ENCODE measurements at regions of chr16 and their contacts with region 1.

Region 1: DNA sequence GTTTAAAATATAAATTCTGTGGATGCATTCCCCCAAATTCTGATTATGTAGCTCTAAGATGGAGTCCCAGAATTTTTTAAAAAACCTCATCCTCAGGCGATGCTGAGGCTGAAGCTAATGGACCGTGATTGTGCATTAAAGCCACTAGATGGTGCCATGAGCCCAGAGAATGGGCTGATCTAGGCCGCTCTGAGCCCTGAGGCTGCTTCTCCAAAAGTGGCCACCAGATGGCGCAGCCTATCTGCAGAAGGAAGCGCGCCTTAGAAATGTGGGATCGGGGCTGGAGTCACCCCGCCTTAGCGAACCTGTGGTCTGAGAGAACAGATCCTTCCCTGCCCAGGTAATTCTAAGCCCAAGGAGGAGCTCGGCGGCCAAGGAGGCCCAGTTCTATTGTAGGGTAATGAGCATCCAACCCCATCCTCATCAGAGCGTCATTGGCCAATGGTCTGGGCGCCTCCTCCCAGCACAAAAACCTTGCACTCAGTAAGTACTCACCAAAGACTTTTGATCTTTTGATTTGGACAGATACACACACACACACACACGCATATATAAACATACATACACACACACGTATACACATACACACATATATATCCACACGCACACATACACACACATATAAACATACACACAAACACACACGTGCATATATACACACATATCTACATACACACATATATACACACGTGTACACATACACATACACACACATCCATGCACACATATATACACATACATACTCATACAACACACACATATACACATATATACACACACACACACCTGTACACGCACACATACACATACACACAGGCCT is 13.7 kb upstream of the MMP2 start:
- DNase-seq: peak; percentile 94
- ATAC-seq: peak; percentile 88
- H3K4me3 Mint-ChIP-seq: no peak overlapping the region
- H3K27ac Mint-ChIP-seq: no peak overlapping the region
- H3K4me1 Mint-ChIP-seq: peaks cover 7% of the 10 kb centered on the region
- H3K27me3 Mint-ChIP-seq: peaks cover 24% of the 10 kb centered on the region
- CTCF ChIP-seq: peak; percentile 99

Region 2: DNA sequence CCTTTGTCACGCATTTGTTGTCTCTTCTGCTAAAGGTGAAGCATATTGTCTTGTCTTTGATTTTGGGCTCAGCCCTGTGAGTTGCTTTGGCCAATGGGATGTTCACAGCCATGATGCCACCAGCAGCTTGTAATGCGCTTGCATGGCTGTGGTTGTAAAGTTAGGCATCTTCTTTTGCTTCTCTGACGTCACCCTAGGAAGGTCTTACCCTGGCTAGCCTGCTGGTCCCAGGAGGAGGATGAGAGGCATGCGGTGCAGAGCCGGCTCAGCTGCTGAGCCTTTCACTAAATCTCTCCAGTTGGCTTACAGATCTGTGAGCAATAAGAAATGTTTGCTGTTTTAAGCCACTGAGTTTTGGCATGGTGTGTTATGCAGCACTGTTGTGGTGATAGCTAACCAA is 100.5 kb before region 1 on chr16:
- CTCF ChIA-PET with region 1: no interaction called
- POLR2A ChIA-PET with region 1: no interaction called
- DNase-seq: no peak
- ATAC-seq: no peak
- H3K4me3 Mint-ChIP-seq: no peak overlapping the region
- H3K27ac Mint-ChIP-seq: no peak overlapping the region
- H3K4me1 Mint-ChIP-seq: peaks cover 5% of the 10 kb centered on the region; the same call in 1 of the 2 replicates
- H3K27me3 Mint-ChIP-seq: peaks cover 3% of the 10 kb centered on the region; the same call in 1 of the 2 replicates
- CTCF ChIP-seq: no peak

Region 3: DNA sequence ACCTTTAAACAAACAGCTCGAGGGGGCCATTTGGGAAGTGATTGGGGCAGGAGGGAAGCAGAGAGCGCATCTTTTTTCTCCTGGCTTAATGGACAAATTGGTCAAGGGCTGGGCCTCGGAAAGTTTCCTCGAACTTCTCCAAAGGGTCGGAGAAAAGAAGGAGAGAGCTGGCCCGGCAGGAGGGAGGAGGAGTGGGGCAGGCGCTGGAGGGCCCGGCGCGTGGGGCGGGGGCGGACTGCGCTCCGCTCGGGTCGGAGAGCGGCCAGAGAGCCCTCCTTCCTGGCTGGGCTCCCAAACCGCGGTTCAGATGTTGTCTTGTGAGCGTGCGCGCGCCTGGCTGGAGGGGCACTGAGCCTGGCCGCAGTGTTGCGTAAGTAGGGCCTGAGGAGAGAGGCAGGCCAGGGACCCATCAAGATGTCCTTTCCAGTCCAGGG is 15.0 kb after region 1 on chr16:
- CTCF ChIA-PET with region 1: interaction called, 40 read pairs
- POLR2A ChIA-PET with region 1: no interaction called
- DNase-seq: peak; percentile 44
- ATAC-seq: peak; percentile 43
- H3K4me3 Mint-ChIP-seq: peak overlapping the region; percentile 90
- H3K27ac Mint-ChIP-seq: no peak overlapping the region
- H3K4me1 Mint-ChIP-seq: peaks cover 27% of the 10 kb centered on the region
- H3K27me3 Mint-ChIP-seq: peaks cover 61% of the 10 kb centered on the region
- CTCF ChIP-seq: no peak

Region 4: DNA sequence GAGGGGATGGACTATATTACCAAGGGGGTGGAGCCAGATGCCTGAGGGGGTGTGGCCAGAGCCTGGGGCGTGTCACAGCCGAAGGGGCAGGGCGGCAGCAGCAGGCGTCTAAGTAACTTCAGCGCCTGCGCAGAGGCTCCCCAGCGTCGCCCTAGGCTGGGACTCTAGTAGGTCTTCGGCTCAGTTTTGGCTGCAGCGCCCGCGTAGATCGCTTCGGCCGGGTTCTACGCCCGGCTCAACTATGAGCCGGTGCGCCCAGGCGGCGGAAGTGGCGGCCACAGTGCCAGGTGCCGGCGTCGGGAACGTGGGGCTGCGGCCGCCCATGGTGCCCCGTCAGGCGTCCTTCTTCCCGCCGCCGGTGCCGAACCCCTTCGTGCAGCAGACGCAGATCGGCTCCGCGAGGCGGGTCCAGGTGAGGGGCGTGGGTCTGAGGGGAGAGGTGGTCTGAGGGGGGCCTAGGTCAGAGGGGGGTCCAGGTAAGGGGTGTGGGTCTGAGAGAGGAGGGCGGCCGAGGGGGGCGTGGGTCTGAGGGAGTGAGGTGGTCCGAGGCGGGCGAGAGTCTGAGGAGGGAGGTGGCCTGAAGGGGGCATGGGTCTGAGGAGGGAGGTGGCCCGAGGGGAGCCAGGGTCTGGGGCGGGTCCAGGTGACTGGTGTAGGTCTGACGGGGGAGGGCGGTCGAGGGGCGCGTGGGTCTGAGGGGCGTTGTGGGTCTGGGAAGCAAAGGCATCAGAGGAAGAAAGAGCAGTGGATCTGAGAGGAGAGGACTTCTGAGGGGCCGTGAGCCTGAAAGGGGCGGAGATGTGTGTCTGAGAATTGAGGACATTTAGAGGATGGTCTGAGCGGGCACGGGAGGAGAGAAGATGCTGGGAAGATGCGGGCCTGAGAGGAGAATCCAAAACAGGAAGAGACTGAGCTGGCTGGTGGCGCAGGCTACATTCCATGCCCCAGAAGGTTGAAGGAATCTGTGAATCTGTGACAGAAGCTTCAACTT is 43.9 kb after region 1 on chr16 and contains the start of gene LPCAT2:
- CTCF ChIA-PET with region 1: interaction called, 14 read pairs
- POLR2A ChIA-PET with region 1: no interaction called
- DNase-seq: peak; percentile 95
- ATAC-seq: peak; percentile 94
- H3K4me3 Mint-ChIP-seq: peak within 1 kb of the TSS; percentile 86
- H3K27ac Mint-ChIP-seq: no peak within 1 kb of the TSS; the same call in 1 of the 2 replicates
- H3K4me1 Mint-ChIP-seq: peaks cover 20% of the 10 kb centered on the region
- H3K27me3 Mint-ChIP-seq: peaks cover 4% of the 10 kb centered on the region; the same call in 1 of the 2 replicates
- CTCF ChIP-seq: no peak
- total RNA-seq, gene LPCAT2: 5.8 to 7.1 TPM (median 7.0 TPM) in 3 replicates

Region 5: DNA sequence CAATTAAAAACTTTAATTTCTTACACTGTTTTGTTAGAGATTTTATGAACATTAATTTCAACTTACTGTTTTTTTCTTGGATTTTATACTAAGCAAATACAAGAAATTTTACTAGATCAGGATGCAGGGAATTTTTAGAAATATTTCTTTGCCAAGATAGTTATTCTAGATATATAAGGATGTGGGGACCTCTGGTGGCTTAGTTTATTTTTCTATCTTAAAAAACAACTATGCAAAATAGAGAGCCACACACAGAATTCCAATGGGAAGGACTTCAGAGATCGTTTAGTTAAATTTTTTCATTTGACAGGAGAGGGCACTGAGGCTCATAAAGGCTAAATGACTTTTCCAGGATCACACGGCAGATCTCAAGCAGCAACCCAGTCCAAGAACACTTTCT is 78.2 kb after region 1 on chr16:
- CTCF ChIA-PET with region 1: interaction called, 46 read pairs
- POLR2A ChIA-PET with region 1: no interaction called
- DNase-seq: no peak
- ATAC-seq: no peak
- H3K4me3 Mint-ChIP-seq: no peak overlapping the region
- H3K27ac Mint-ChIP-seq: no peak overlapping the region
- H3K4me1 Mint-ChIP-seq: 0 out of 2 replicates have a peak, but pooled peaks cover 4% of the 10 kb centered on the region
- H3K27me3 Mint-ChIP-seq: no peaks in the 10 kb centered on the region
- CTCF ChIP-seq: no peak

Region 6: GRCh38 chr16:55622930-55623561 is 157.8 kb after region 1 on chr16:
- CTCF ChIA-PET with region 1: interaction called, 33 read pairs
- POLR2A ChIA-PET with region 1: no interaction called
- DNase-seq: peak; percentile 73
- ATAC-seq: peak; percentile 97
- H3K4me3 Mint-ChIP-seq: no peak overlapping the region
- H3K27ac Mint-ChIP-seq: peak overlapping the region; percentile 21; the same call in 1 of the 2 replicates
- H3K4me1 Mint-ChIP-seq: peaks cover 17% of the 10 kb centered on the region
- H3K27me3 Mint-ChIP-seq: peaks cover 10% of the 10 kb centered on the region
- CTCF ChIP-seq: peak; percentile 28; the same call in 1 of the 2 replicates

Region 7: GRCh38 chr16:55668340-55669281 is 203.3 kb after region 1 on chr16:
- CTCF ChIA-PET with region 1: interaction called, 12 read pairs
- POLR2A ChIA-PET with region 1: no interaction called
- DNase-seq: peak; percentile 18
- ATAC-seq: peak; percentile 66
- H3K4me3 Mint-ChIP-seq: no peak overlapping the region
- H3K27ac Mint-ChIP-seq: no peak overlapping the region
- H3K4me1 Mint-ChIP-seq: peaks cover 15% of the 10 kb centered on the region
- H3K27me3 Mint-ChIP-seq: peaks cover 2% of the 10 kb centered on the region; the same call in 1 of the 2 replicates
- CTCF ChIP-seq: no peak

Region 8: GRCh38 chr16:55711959-55712876 is 246.9 kb after region 1 on chr16:
- CTCF ChIA-PET with region 1: interaction called, 213 read pairs
- POLR2A ChIA-PET with region 1: no interaction called
- DNase-seq: peak; percentile 76
- ATAC-seq: peak; percentile 91
- H3K4me3 Mint-ChIP-seq: no peak overlapping the region
- H3K27ac Mint-ChIP-seq: no peak overlapping the region
- H3K4me1 Mint-ChIP-seq: 0 out of 2 replicates have a peak, but pooled peaks cover 4% of the 10 kb centered on the region
- H3K27me3 Mint-ChIP-seq: no peaks in the 10 kb centered on the region
- CTCF ChIP-seq: 0 out of 2 replicates have a peak, but pooled peaks have one; percentile 26